Breast epithelium (tissue), 4 donors: ENCODE measurements at regions of chr15 and their contacts with region 1.

Region 1: DNA sequence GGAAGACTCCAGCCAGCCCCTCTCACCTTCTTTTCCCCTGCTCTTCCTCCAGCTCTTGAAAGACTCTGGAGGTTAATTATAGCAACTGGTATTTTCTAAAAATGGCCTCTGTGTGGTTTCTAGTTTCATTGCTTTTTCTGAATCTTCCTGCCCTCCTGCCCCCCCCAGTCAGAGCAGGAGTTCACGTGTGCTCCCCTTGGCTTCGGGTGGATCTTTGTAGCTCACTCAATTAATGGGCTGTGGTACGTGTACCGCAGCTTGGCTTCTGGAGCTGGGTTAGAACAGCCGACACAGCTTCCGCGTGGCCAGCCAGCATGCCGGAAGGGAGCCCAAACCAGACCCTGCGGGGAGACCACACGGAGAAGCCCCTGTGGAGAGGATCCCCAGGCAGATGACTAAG is 31.5 kb downstream of the TM2D3 start:
- DNase-seq: no peak
- H3K4me3 ChIP-seq: no peak overlapping the region
- H3K27ac ChIP-seq: no peak overlapping the region
- H3K4me1 ChIP-seq: peaks cover 0 to 6% of the 10 kb centered on the region in 2 donors
- H3K27me3 ChIP-seq: no peaks in the 10 kb centered on the region
- CTCF ChIP-seq: no peak
- POLR2A ChIP-seq: no peak

Region 2: GRCh38 chr15:99998641-99999101 is 1622.0 kb before region 1 on chr15:
- intact Hi-C with region 1: loop called (anchors 5 kb)
- DNase-seq: peak; percentile 51 to 74
- H3K4me3 ChIP-seq: no peak overlapping the region
- H3K27ac ChIP-seq: peak overlapping the region; percentile 15 to 38
- H3K4me1 ChIP-seq: peaks cover 0 to 4% of the 10 kb centered on the region in 2 donors
- H3K27me3 ChIP-seq: no peaks in the 10 kb centered on the region
- CTCF ChIP-seq: no peak
- POLR2A ChIP-seq: no peak